ENCODE measurements at regions of chr17 and their contacts with region 1.

Region 1: GRCh38 chr17:49997791-49998703 is 3.0 kb upstream of the DLX3 start:
- DNase-seq: peak; percentile 90
- ATAC-seq: peak; percentile 93
- H3K4me3 Mint-ChIP-seq: no peak overlapping the region
- H3K27ac Mint-ChIP-seq: no peak overlapping the region
- H3K4me1 Mint-ChIP-seq: peaks cover 24% of the 10 kb centered on the region
- H3K27me3 Mint-ChIP-seq: peaks cover 71% of the 10 kb centered on the region

Region 2: GRCh38 chr17:49556223-49556971 is 441.6 kb before region 1 on chr17:
- CTCF ChIA-PET with region 1: interaction called, 36 read pairs
- DNase-seq: peak; percentile 88
- ATAC-seq: peak; percentile 98
- H3K4me3 Mint-ChIP-seq: no peak overlapping the region
- H3K27ac Mint-ChIP-seq: peak overlapping the region; percentile 22
- H3K4me1 Mint-ChIP-seq: peaks cover 5% of the 10 kb centered on the region
- H3K27me3 Mint-ChIP-seq: peaks cover 14% of the 10 kb centered on the region

Region 3: GRCh38 chr17:49815761-49816281 is 182.2 kb before region 1 on chr17:
- CTCF ChIA-PET with region 1: interaction called, 15 read pairs
- DNase-seq: no peak
- ATAC-seq: no peak
- H3K4me3 Mint-ChIP-seq: no peak overlapping the region
- H3K27ac Mint-ChIP-seq: peak overlapping the region; percentile 58
- H3K4me1 Mint-ChIP-seq: peaks cover 41% of the 10 kb centered on the region
- H3K27me3 Mint-ChIP-seq: no peaks in the 10 kb centered on the region

Region 4: GRCh38 chr17:49899191-49899485 is 98.9 kb before region 1 on chr17:
- CTCF ChIA-PET with region 1: interaction called, 33 read pairs
- DNase-seq: no peak
- ATAC-seq: no peak
- H3K4me3 Mint-ChIP-seq: no peak overlapping the region
- H3K27ac Mint-ChIP-seq: no peak overlapping the region
- H3K4me1 Mint-ChIP-seq: no peaks in the 10 kb centered on the region
- H3K27me3 Mint-ChIP-seq: peaks cover 71% of the 10 kb centered on the region

Region 5: GRCh38 chr17:49952209-49952911 is 45.7 kb before region 1 on chr17:
- CTCF ChIA-PET with region 1: interaction called, 273 read pairs
- DNase-seq: peak; percentile 87
- ATAC-seq: peak; percentile 93
- H3K4me3 Mint-ChIP-seq: no peak overlapping the region
- H3K27ac Mint-ChIP-seq: no peak overlapping the region
- H3K4me1 Mint-ChIP-seq: no peaks in the 10 kb centered on the region
- H3K27me3 Mint-ChIP-seq: peaks cover 48% of the 10 kb centered on the region

Region 6: DNA sequence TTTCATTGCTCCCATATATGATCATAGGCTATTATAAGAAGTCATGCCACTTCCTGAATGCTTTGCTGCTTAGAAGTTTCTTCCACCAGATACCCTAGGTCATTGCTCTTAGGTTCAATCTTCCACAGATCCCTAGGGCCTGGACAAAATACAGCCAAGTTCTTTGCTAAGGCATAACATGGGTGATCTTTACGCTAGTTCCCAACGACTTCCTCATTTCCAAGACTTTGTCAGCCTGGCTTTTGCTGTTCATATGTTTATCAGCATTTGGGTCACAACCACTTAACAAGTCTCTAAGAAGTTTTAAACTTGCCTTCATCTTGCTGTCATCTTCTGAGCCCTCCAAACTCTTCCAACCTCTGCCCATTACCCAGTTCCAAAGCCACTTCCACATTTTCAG is 17.1 kb after region 1 on chr17:
- CTCF ChIA-PET with region 1: interaction called, 22 read pairs
- DNase-seq: no peak
- ATAC-seq: no peak
- H3K4me3 Mint-ChIP-seq: no peak overlapping the region
- H3K27ac Mint-ChIP-seq: no peak overlapping the region
- H3K4me1 Mint-ChIP-seq: no peaks in the 10 kb centered on the region
- H3K27me3 Mint-ChIP-seq: peaks cover 27% of the 10 kb centered on the region